CD8-positive, alpha-beta memory T cell (primary cell): ENCODE measurements at regions of chr10 and their contacts with region 1.

Region 1: DNA sequence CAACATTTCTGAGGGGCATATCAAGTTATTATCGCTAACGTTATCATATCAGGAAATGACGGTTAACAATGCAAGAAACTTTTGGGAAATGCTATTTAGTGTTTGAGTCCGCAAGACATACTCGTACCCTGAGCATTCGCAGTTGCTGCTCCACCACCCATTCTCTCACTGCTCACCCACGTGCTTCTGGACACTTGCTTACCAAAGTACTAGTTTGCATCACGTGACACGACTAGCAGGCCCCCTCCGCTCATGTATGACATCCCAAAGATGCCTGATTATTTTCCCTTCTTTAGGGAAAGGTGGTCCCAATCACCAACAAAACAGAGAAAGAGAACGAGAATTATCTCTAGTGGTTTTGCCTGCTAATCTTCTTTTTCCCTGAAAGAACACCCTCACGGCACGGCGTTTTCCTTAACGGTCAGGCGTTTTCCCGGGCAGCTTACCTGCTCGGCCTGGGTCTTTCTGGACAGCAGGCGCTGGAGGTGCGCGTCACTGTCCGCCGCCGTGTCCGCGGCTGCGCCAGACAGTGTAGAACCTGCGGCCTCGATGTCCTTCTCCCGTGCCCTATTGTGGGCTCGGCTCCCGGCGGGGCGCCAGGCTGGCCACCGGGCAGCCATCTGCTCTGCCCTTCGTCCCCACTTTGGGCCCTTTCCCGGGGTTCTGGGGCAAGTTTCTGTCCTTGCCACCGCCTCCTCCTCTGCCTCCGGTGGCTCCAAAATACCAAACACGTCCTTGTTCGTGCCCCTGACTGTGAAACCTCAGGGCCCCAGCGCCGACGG is at the start of gene SUPV3L1:
- DNase-seq: peak; percentile 76 to 91 (median 89)
- H3K4me3 ChIP-seq: peak within 1 kb of the TSS; percentile 77
- H3K4me3 Mint-ChIP-seq: peak within 1 kb of the TSS; percentile 95 to 99 (median 97)
- H3K27ac ChIP-seq: peak within 1 kb of the TSS; percentile 97
- H3K27ac Mint-ChIP-seq: peak within 1 kb of the TSS; percentile 99 to 100 (median 100)
- H3K4me1 ChIP-seq: peaks cover 15% of the 10 kb centered on the region
- H3K4me1 Mint-ChIP-seq: peaks cover 43 to 53% (median 53%) of the 10 kb centered on the region in 3 donors
- H3K27me3 ChIP-seq: no peaks in the 10 kb centered on the region
- H3K27me3 Mint-ChIP-seq: peaks cover 0 to 5% of the 10 kb centered on the region in 2 donors
- total RNA-seq, gene SUPV3L1: 50.0 to 51.0 TPM

Region 2: GRCh38 chr10:69123747-69124562 is 56.0 kb before region 1 on chr10 and contains the start of gene VPS26A:
- CTCF ChIA-PET with region 1: no interaction called
- POLR2A ChIA-PET with region 1: interaction called, 10 read pairs
- DNase-seq: peak; percentile 98 to 99 (median 99)
- H3K4me3 ChIP-seq: peak within 1 kb of the TSS; percentile 88
- H3K4me3 Mint-ChIP-seq: peak within 1 kb of the TSS; percentile 91 to 98 (median 94)
- H3K27ac ChIP-seq: peak within 1 kb of the TSS; percentile 97
- H3K27ac Mint-ChIP-seq: peak within 1 kb of the TSS; percentile 88 to 98 (median 97)
- H3K4me1 ChIP-seq: peaks cover 23% of the 10 kb centered on the region
- H3K4me1 Mint-ChIP-seq: peaks cover 26 to 34% (median 30%) of the 10 kb centered on the region in 3 donors
- H3K27me3 ChIP-seq: no peaks in the 10 kb centered on the region
- H3K27me3 Mint-ChIP-seq: no peaks in the 10 kb centered on the region
- total RNA-seq, gene VPS26A: 44.8 to 46.7 TPM